CD8-positive, alpha-beta T cell (primary cell): ENCODE measurements at regions of chr18 and their contacts with region 1.

Region 1: DNA sequence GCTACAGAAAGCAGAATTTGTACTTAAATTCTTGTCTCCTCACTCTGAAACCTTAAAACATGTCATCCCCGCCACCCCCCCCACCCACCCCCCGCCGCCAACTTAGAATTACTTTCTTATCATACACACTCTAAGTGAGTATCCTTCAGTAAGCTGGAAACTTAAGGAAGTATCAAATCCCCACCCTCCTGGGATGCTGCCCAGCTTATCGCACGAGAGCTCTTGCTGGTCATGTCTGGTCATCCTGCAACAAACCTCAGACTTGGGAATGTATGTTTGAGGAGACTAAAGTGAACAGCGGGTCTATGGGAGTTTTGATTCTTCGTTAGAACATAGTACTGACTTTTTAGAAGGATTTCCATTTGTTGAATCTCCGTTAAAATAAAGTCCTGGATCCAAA is 203.3 kb downstream of the PTGR3 start:
- DNase-seq: no peak
- ATAC-seq: no peak
- H3K4me3 ChIP-seq: no peak overlapping the region
- H3K4me3 Mint-ChIP-seq: no peak overlapping the region
- H3K27ac ChIP-seq: no peak overlapping the region
- H3K27ac Mint-ChIP-seq: no peak overlapping the region
- H3K4me1 ChIP-seq: no peaks in the 10 kb centered on the region
- H3K4me1 Mint-ChIP-seq: no peaks in the 10 kb centered on the region
- H3K27me3 ChIP-seq: no peaks in the 10 kb centered on the region
- H3K27me3 Mint-ChIP-seq: no peaks in the 10 kb centered on the region
- CTCF ChIP-seq: no peak

Region 2: DNA sequence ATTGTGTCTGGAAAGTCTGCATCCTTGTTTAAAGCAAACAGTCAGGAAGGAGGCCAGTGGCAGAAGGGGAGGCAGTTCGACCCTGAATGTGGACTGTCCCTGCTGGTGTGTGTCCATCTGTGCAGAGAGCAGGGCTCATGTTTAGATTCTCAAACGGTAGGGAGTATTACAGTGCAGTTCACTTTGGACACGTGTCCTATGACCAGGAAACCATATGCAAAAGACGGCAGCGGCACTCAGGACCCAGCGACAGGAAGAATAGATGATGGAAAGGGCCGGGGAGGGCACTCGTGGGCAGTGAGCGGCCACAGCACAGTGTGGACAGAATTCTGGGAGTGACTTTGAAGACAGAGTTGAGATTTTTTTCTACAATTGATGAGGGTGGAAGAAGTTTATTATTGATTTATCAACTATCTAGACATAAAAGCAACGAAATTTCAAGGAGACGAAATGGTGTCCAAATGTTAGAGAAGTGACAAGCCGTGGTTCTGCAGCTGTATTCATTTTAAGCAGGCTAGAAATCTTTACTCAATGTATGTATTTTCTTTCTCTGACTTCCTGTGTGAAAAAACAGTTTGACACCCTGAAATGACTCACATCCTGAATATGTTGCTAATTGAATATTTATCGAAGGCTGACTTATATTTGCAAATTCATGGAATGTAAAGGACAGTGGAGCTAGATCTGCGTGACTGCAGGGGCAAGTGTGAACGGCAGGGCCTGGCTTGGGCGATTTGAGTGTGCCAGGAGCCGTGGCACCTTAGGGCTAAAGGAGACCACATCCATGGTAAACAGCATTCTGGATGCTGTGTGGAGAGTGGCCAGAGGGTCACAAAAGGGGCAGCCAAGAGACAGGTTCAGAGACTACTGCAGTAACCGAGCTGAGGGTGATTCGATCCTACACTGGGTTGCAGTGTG is 10.9 kb before region 1 on chr18:
- CTCF ChIA-PET with region 1: interaction called, 3 read pairs
- POLR2A ChIA-PET with region 1: interaction called, 4 read pairs
- intact Hi-C with region 1: loop called in 1 of 2 experiments (anchors 2 kb)
- DNase-seq: peak in 5 of 9 experiments; percentile 10 to 76 (median 53)
- ATAC-seq: peak; percentile 67
- H3K4me3 ChIP-seq: peak overlapping the region in 1 of 2 experiments; percentile 42
- H3K4me3 Mint-ChIP-seq: peak overlapping the region; percentile 71
- H3K27ac ChIP-seq: peak overlapping the region; percentile 35 to 84
- H3K27ac Mint-ChIP-seq: peak overlapping the region; percentile 90
- H3K4me1 ChIP-seq: peaks cover 11% of the 10 kb centered on the region
- H3K4me1 Mint-ChIP-seq: peaks cover 51% of the 10 kb centered on the region
- H3K27me3 ChIP-seq: no peaks in the 10 kb centered on the region
- H3K27me3 Mint-ChIP-seq: no peaks in the 10 kb centered on the region
- CTCF ChIP-seq: no peak

Region 3: GRCh38 chr18:75023473-75023872 is 17.8 kb after region 1 on chr18:
- CTCF ChIA-PET with region 1: no interaction called
- POLR2A ChIA-PET with region 1: no interaction called
- intact Hi-C with region 1: loop called in 1 of 2 experiments (anchors 1 kb)
- DNase-seq: no peak
- ATAC-seq: no peak
- H3K4me3 ChIP-seq: no peak overlapping the region
- H3K4me3 Mint-ChIP-seq: no peak overlapping the region
- H3K27ac ChIP-seq: no peak overlapping the region
- H3K27ac Mint-ChIP-seq: no peak overlapping the region
- H3K4me1 ChIP-seq: no peaks in the 10 kb centered on the region
- H3K4me1 Mint-ChIP-seq: peaks cover 18% of the 10 kb centered on the region
- H3K27me3 ChIP-seq: no peaks in the 10 kb centered on the region
- H3K27me3 Mint-ChIP-seq: no peaks in the 10 kb centered on the region
- CTCF ChIP-seq: no peak

Region 4: DNA sequence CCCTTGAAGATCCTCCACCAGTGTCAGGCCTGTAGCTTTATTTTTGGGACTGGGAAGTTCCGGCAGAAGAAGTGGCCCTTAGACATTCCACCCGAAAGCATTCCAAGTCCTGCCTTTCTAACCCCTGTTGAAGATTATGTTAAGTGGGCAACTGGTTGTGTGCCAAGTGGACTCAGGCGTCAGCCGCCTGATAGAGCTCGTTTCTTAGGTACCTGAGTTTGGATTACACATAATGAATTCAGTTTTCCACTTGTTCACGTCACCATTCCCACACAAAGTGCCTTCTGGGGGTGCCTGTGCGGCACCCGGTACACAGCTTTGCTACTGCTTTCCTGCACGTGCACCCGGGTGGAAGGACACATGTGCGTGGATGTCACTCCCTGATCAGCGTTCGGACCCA is 46.8 kb after region 1 on chr18:
- CTCF ChIA-PET with region 1: no interaction called
- POLR2A ChIA-PET with region 1: no interaction called
- intact Hi-C with region 1: no loop called
- DNase-seq: no peak
- ATAC-seq: no peak
- H3K4me3 ChIP-seq: no peak overlapping the region
- H3K4me3 Mint-ChIP-seq: no peak overlapping the region
- H3K27ac ChIP-seq: no peak overlapping the region
- H3K27ac Mint-ChIP-seq: no peak overlapping the region
- H3K4me1 ChIP-seq: no peaks in the 10 kb centered on the region
- H3K4me1 Mint-ChIP-seq: no peaks in the 10 kb centered on the region
- H3K27me3 ChIP-seq: no peaks in the 10 kb centered on the region
- H3K27me3 Mint-ChIP-seq: no peaks in the 10 kb centered on the region
- CTCF ChIP-seq: no peak